ENCODE measurements at regions of chr10 and their contacts with region 1.

Region 1: GRCh38 chr10:100346765-100347567 is at the start of gene SCD:
- DNase-seq: peak; percentile 43 to 86 (median 62)
- ATAC-seq: peak; percentile 84 to 92 (median 86)
- H3K4me3 ChIP-seq: peak within 1 kb of the TSS; percentile 69 to 77
- H3K4me3 Mint-ChIP-seq: peak within 1 kb of the TSS; percentile 80 to 88 (median 81)
- H3K27ac ChIP-seq: peak within 1 kb of the TSS; percentile 35
- H3K27ac Mint-ChIP-seq: peak within 1 kb of the TSS; percentile 23 to 29
- H3K4me1 ChIP-seq: peaks cover 2 to 31% of the 10 kb centered on the region in 2 experiments
- H3K4me1 Mint-ChIP-seq: peaks cover 17 to 32% (median 21%) of the 10 kb centered on the region in 3 donors
- H3K27me3 ChIP-seq: peaks cover 0 to 9% of the 10 kb centered on the region in 2 experiments
- H3K27me3 Mint-ChIP-seq: peaks cover 0 to 5% of the 10 kb centered on the region in 2 donors
- total RNA-seq, gene SCD: 2.1 to 5.7 (median 4.7) TPM

Region 2: DNA sequence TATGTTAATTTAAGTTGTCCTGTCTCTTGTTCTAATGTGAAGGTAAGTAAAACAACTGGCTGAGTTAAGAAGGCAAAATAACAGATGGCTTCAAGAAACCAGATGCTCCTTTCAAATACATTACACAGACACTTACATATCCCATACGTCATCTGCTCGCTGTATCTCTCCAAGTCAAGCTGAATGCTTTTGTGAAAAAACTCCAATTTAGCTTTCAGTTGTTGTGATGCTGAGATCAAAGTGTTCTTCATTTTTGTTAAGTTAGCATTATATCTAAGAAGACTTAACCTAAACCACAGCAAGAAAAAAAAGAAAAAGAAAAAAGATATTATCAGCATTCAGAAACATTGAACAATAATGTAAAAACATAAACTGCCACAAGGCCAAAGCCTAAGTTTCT is 142.6 kb before region 1 on chr10:
- CTCF ChIA-PET with region 1: no interaction called
- POLR2A ChIA-PET with region 1: no interaction called
- DNase-seq: peak in 1 of 35 experiments; percentile 34
- ATAC-seq: peak in 1 of 4 experiments; percentile 64
- H3K4me3 ChIP-seq: no peak overlapping the region
- H3K4me3 Mint-ChIP-seq: no peak overlapping the region
- H3K27ac ChIP-seq: no peak overlapping the region
- H3K27ac Mint-ChIP-seq: peak overlapping the region in 1 of 2 donors; percentile 53
- H3K4me1 ChIP-seq: no peaks in the 10 kb centered on the region
- H3K4me1 Mint-ChIP-seq: peaks cover 0 to 8% (median 0%) of the 10 kb centered on the region in 3 donors
- H3K27me3 ChIP-seq: no peaks in the 10 kb centered on the region
- H3K27me3 Mint-ChIP-seq: no peaks in the 10 kb centered on the region

Region 3: DNA sequence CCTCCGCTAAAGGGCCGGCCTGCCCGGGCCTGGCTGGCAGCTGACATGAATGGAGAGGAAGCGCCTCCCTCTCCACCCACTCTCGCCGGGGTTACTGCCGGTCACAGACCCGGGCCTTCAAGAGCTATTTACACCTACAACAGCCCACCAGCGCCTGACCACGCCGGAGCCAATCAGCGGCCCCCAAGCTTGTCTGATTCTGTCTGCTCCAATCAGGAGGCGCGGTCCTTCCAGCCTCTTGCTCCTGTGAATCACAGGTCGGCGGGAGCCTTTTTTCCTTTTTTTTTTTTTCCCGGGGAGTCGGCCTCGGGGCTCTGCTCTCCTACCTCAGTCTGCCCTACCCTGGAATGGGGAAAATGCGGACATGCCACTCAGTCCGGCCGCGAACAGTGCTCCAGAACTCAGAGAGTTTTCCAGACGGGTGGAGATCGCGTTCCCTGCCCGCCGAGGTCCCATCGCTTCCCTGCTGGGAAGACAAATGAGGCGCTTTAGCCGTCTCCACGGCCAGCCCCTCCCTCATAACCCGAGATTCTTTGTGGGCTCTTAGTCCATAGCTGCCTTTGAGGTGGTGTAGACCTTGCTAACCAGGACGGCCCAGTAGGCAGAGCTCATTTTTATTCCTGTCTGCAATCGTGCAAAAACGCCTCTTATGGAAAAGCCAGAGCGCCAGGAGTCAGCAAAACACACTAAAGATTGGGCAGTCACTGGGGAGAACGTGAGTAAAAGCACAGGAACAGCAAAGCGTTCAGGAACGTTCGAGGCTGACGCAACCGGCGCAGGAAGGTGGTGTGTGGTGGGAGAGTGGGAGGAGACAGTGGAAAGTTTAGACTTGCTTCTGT is 26.6 kb after region 1 on chr10:
- CTCF ChIA-PET with region 1: interaction called, 5 to 37 read pairs
- POLR2A ChIA-PET with region 1: interaction called, 5 to 9 read pairs
- DNase-seq: peak; percentile 54 to 91 (median 78)
- ATAC-seq: peak; percentile 81 to 86 (median 84)
- H3K4me3 ChIP-seq: peak overlapping the region; percentile 67 to 80
- H3K4me3 Mint-ChIP-seq: no peak overlapping the region
- H3K27ac ChIP-seq: peak overlapping the region; percentile 92
- H3K27ac Mint-ChIP-seq: no peak overlapping the region
- H3K4me1 ChIP-seq: peaks cover 34 to 52% of the 10 kb centered on the region in 2 experiments
- H3K4me1 Mint-ChIP-seq: peaks cover 19 to 21% (median 20%) of the 10 kb centered on the region in 3 donors
- H3K27me3 ChIP-seq: no peaks in the 10 kb centered on the region
- H3K27me3 Mint-ChIP-seq: no peaks in the 10 kb centered on the region